Head of caudate nucleus (tissue), 42 donors: ENCODE measurements at regions of chr12 and their contacts with region 1.

Region 1: DNA sequence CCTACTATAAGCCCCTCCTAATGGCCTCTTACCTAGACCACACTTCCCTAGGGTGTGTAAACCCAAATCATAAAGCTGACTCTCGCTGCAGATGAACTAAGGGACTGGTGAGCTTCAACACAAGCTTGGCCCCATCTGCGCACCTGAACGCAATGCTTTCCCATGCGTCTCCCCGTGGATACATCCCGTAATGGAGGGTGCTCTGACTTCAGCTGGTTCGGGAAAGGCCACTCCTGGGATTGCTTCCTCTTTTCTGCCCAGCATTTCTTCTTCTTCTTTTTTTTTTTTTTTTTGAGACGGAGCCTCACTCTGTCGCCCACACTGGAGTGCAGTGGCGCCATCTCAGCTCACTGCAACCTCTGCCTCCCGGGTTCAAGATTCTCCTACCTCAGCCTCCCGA is 27.7 kb upstream of the ETFBKMT start:
- DNase-seq: no peak

Region 2: GRCh38 chr12:31406345-31406744 is 225.4 kb before region 1 on chr12:
- intact Hi-C with region 1: loop called (anchors 2 kb)
- DNase-seq: no peak

Region 3: GRCh38 chr12:31783996-31784645 is 152.3 kb after region 1 on chr12:
- intact Hi-C with region 1: no loop called
- DNase-seq: peak in 1 of 42 donors; percentile 21